CD4-positive, alpha-beta memory T cell (primary cell): ENCODE measurements at regions of chr3 and their contacts with region 1.

Region 1: DNA sequence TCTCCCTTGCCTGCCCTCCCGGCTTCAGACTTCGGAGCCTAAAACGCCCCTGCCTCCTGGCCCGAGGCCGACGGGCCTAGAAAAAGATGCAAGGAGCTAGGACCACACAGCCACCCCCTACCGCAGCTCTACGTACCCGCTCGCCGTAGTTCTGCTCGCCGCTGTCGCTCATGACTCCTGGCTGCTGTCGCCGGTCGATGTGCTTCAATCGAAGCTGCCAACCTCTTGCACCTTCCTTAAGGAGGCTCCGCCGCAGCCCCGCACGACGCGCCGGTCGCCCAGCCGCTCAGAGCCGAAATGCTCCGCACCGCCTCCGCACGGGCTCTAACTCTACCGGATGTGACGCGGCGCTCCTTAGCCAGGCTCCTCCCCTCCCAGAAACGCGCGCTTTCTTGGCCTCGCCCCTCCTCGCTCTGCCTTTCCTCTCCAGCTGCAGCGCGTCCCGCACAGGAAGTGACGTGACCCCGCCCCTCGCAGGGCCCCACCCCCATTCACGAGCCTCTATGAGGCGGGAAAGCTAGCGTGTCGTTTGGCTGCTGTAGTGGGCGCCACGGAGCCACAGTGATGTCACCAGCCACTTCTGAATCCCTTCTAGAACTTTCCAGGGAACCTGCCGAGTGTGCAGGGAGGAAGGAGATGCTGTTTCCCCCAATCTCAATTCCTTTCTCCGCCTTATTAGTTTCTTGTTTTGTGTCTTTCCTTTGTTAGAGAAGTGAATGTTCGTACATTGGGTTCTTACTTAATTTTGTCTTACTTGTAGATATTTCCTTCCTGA is at the start of gene TRA2B:
- DNase-seq: peak; percentile 97 to 99 (median 99)
- H3K4me3 ChIP-seq: peak within 1 kb of the TSS; percentile 98
- H3K4me3 Mint-ChIP-seq: peak within 1 kb of the TSS; percentile 98 to 100 (median 100)
- H3K27ac ChIP-seq: peak within 1 kb of the TSS; percentile 99
- H3K27ac Mint-ChIP-seq: peak within 1 kb of the TSS; percentile 100
- H3K4me1 ChIP-seq: peaks cover 32% of the 10 kb centered on the region
- H3K4me1 Mint-ChIP-seq: peaks cover 26 to 62% (median 35%) of the 10 kb centered on the region in 4 donors
- H3K27me3 ChIP-seq: no peaks in the 10 kb centered on the region
- H3K27me3 Mint-ChIP-seq: no peaks in the 10 kb centered on the region
- total RNA-seq, gene TRA2B: 179 to 181 TPM

Region 2: DNA sequence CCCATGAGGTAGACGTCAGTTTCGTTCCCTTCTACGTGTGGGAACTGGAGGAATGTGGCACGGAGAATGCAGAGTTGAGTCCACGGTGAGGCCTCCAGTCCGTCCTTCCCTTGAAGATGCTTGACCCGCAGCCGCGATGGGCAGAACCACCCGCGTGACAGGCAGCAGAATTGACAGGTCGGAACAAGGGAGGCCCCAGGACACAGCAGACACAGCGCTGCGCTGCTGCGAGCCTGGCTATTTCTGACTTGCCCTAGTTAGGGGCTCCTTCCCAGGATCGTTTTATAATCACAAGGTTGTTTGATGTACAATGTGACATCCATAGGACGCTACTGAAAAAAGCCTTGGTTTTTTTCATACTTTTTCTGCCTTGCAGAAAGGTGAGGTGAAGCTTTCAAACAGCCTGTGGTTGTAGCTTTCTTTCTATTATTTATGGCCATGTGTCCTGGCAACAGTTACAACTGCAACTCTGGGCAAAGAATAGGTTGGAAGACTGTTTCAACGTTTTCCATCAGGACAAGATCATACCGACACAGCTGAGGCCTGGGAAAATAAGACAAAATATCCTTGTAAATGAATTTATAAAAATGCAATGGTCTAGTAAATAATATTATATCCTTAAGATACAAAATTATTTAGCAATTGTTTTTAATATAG is 429.4 kb before region 1 on chr3:
- CTCF ChIA-PET with region 1: no interaction called
- POLR2A ChIA-PET with region 1: no interaction called
- intact Hi-C with region 1: loop called (anchors 10 kb)
- DNase-seq: no peak
- H3K4me3 ChIP-seq: no peak overlapping the region
- H3K4me3 Mint-ChIP-seq: no peak overlapping the region
- H3K27ac ChIP-seq: no peak overlapping the region
- H3K27ac Mint-ChIP-seq: no peak overlapping the region
- H3K4me1 ChIP-seq: no peaks in the 10 kb centered on the region
- H3K4me1 Mint-ChIP-seq: no peaks in the 10 kb centered on the region
- H3K27me3 ChIP-seq: no peaks in the 10 kb centered on the region
- H3K27me3 Mint-ChIP-seq: peaks cover 4 to 6% of the 10 kb centered on the region in 2 donors

Region 3: DNA sequence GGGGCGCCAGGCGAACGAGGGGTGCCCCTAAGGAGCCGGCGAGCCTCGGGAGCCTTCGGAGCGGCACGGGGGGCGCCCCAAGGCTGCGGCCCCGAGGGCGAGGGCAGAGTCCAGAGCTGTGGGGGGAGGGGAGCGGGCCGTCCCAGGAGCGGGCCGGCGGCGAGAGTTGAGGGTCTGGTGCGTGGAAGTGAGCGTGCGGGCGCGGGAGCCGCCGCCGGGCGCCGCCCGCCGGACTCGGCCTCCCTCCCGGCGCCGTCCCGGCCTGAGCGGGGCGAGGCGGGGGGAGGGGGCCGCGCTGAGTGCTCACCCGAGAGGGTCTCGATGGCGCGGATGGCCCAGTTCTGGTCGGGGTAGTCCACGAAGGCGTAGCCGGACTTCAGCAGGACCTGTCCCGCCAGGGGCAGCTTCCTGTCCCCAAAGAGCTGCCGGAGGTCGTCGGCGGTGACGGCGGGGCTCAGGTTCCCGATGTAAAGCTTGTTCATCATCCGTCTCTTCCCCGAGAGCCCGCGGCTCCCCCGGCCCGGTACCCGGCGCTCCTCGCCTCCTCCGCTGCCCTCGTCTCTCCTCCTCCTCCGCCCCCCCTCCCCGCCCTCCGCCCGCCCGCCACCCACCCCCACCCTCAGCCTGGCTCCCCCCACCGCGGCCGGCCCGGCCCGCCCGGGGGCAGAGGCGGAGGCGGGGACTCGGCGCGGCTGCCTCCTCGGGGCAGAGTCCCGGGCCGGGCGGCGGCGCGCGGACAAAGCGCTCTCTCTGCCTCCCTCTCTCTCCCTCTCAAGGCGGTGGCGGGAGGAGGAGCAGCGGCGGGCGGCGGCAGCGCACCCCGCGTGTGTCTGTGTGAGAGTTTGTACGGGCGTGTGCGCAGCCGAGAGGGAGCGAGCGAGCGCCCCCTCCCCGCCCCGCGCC is 113.1 kb before region 1 on chr3 and contains the start of gene IGF2BP2:
- CTCF ChIA-PET with region 1: no interaction called
- POLR2A ChIA-PET with region 1: no interaction called
- intact Hi-C with region 1: loop called (anchors 10 kb)
- DNase-seq: peak; percentile 25 to 46 (median 34)
- H3K4me3 ChIP-seq: peak within 1 kb of the TSS in 1 of 2 donors; percentile 38
- H3K4me3 Mint-ChIP-seq: peak within 1 kb of the TSS; percentile 80 to 89 (median 82)
- H3K27ac ChIP-seq: no peak within 1 kb of the TSS
- H3K27ac Mint-ChIP-seq: peak within 1 kb of the TSS in 1 of 7 donors; percentile 80
- H3K4me1 ChIP-seq: peaks cover 12% of the 10 kb centered on the region
- H3K4me1 Mint-ChIP-seq: peaks cover 5 to 21% (median 11%) of the 10 kb centered on the region in 4 donors
- H3K27me3 ChIP-seq: peaks cover 25% of the 10 kb centered on the region
- H3K27me3 Mint-ChIP-seq: peaks cover 42 to 54% of the 10 kb centered on the region in 2 donors
- total RNA-seq, gene IGF2BP2: not detected

Region 4: GRCh38 chr3:185887066-185887465 is 50.8 kb before region 1 on chr3:
- CTCF ChIA-PET with region 1: no interaction called
- POLR2A ChIA-PET with region 1: no interaction called
- intact Hi-C with region 1: no loop called
- DNase-seq: no peak
- H3K4me3 ChIP-seq: no peak overlapping the region
- H3K4me3 Mint-ChIP-seq: no peak overlapping the region
- H3K27ac ChIP-seq: no peak overlapping the region
- H3K27ac Mint-ChIP-seq: no peak overlapping the region
- H3K4me1 ChIP-seq: no peaks in the 10 kb centered on the region
- H3K4me1 Mint-ChIP-seq: no peaks in the 10 kb centered on the region
- H3K27me3 ChIP-seq: no peaks in the 10 kb centered on the region
- H3K27me3 Mint-ChIP-seq: peaks cover 3 to 6% of the 10 kb centered on the region in 2 donors

Region 5: DNA sequence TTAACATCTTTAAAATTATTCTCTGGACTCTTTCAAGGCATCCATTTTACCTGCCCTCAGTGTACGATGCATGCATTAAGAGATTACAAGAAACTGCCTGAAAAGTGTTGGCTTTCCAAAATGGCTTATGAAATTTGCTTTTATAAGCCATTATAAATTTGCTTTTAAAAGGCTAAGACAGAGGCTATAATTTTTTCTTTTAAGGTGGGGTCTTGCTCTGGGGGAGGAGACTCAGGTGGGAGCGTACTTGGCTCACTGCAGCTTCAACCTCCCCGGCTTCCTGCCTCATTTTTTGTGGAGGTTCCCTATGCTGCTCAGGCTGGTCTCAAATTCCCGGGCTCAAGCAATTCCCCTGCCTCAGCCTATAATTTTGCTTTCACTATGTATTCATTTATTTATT is 17.7 kb before region 1 on chr3:
- CTCF ChIA-PET with region 1: interaction called, 143 read pairs
- POLR2A ChIA-PET with region 1: interaction called, 95 read pairs
- intact Hi-C with region 1: loop called (anchors 1 kb)
- DNase-seq: no peak
- H3K4me3 ChIP-seq: no peak overlapping the region
- H3K4me3 Mint-ChIP-seq: no peak overlapping the region
- H3K27ac ChIP-seq: no peak overlapping the region
- H3K27ac Mint-ChIP-seq: peak overlapping the region in 3 of 7 donors; percentile 41 to 57 (median 49)
- H3K4me1 ChIP-seq: peaks cover 10% of the 10 kb centered on the region
- H3K4me1 Mint-ChIP-seq: peaks cover 13 to 30% (median 16%) of the 10 kb centered on the region in 4 donors
- H3K27me3 ChIP-seq: no peaks in the 10 kb centered on the region
- H3K27me3 Mint-ChIP-seq: no peaks in the 10 kb centered on the region

Region 6: GRCh38 chr3:186570096-186570940 is 632.4 kb after region 1 on chr3 and contains the start of gene DNAJB11:
- CTCF ChIA-PET with region 1: interaction called, 4 read pairs
- POLR2A ChIA-PET with region 1: interaction called, 72 read pairs
- intact Hi-C with region 1: loop called (anchors 1 kb)
- DNase-seq: peak; percentile 96 to 100 (median 99)
- H3K4me3 ChIP-seq: peak within 1 kb of the TSS; percentile 71 to 93
- H3K4me3 Mint-ChIP-seq: peak within 1 kb of the TSS; percentile 89 to 100 (median 94)
- H3K27ac ChIP-seq: peak within 1 kb of the TSS; percentile 91
- H3K27ac Mint-ChIP-seq: peak within 1 kb of the TSS; percentile 95 to 99 (median 98)
- H3K4me1 ChIP-seq: peaks cover 37% of the 10 kb centered on the region
- H3K4me1 Mint-ChIP-seq: peaks cover 30 to 71% (median 45%) of the 10 kb centered on the region in 4 donors
- H3K27me3 ChIP-seq: no peaks in the 10 kb centered on the region
- H3K27me3 Mint-ChIP-seq: no peaks in the 10 kb centered on the region
- total RNA-seq, gene DNAJB11: 34.0 to 38.6 TPM

Region 7: DNA sequence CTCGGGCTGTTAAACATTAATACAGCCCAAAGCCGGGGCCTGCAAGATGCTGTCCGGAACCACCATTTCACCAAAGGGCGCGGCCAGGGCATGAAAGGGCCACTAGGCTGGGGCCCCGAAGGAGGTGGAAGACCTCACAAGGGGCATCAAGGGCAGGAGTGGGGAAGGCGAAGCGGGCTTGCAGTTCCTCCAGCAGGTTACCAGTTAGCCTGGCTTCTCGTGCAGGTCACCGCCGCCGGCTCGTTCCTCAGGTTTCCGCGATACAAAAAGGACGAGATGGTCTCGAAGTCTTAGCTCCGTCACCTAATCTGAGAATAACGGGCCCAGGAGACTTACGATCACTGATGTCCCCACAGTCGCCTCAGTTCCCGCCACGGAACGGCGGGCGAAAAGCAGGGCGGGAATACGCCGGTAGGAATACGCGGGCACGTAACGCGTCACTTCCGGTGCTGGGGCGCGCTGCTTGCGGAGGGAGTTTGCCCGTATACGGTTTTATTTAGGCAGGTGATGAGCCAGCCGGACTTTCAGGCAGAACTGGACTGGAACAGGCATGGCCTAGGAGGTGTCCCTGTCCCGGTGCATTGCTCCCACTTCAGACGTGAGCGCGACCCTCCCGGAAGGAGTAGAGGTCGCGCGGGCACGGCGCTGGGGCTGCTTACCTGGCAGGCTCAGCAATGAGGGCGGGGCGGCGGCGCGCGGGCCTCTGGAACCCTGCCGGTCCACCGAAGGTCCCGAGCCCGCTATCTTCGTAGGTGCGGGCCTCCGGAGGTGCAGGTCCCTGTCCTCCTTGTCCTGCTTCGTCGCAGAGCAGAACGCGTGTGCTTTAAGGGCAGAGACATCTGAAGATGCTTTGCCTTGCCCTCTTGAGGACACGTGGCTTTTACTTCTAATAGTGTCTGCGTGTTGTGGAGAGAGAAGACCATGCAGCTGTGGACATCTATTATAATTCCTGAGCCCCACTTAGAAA is 868.5 kb after region 1 on chr3 and contains the start of gene RFC4:
- CTCF ChIA-PET with region 1: no interaction called
- POLR2A ChIA-PET with region 1: interaction called, 3 read pairs
- intact Hi-C with region 1: loop called (anchors 1 kb)
- DNase-seq: peak; percentile 81 to 88 (median 83)
- H3K4me3 ChIP-seq: peak within 1 kb of the TSS; percentile 90 to 98
- H3K4me3 Mint-ChIP-seq: peak within 1 kb of the TSS; percentile 93 to 98 (median 96)
- H3K27ac ChIP-seq: peak within 1 kb of the TSS; percentile 93
- H3K27ac Mint-ChIP-seq: peak within 1 kb of the TSS; percentile 89 to 97 (median 95)
- H3K4me1 ChIP-seq: peaks cover 18% of the 10 kb centered on the region
- H3K4me1 Mint-ChIP-seq: peaks cover 11 to 33% (median 17%) of the 10 kb centered on the region in 4 donors
- H3K27me3 ChIP-seq: no peaks in the 10 kb centered on the region
- H3K27me3 Mint-ChIP-seq: no peaks in the 10 kb centered on the region
- total RNA-seq, gene RFC4: 21.5 to 24.6 TPM